Sigmoid colon (tissue), 7 donors: ENCODE measurements at regions of chr1 and their contacts with region 1.

Region 1: DNA sequence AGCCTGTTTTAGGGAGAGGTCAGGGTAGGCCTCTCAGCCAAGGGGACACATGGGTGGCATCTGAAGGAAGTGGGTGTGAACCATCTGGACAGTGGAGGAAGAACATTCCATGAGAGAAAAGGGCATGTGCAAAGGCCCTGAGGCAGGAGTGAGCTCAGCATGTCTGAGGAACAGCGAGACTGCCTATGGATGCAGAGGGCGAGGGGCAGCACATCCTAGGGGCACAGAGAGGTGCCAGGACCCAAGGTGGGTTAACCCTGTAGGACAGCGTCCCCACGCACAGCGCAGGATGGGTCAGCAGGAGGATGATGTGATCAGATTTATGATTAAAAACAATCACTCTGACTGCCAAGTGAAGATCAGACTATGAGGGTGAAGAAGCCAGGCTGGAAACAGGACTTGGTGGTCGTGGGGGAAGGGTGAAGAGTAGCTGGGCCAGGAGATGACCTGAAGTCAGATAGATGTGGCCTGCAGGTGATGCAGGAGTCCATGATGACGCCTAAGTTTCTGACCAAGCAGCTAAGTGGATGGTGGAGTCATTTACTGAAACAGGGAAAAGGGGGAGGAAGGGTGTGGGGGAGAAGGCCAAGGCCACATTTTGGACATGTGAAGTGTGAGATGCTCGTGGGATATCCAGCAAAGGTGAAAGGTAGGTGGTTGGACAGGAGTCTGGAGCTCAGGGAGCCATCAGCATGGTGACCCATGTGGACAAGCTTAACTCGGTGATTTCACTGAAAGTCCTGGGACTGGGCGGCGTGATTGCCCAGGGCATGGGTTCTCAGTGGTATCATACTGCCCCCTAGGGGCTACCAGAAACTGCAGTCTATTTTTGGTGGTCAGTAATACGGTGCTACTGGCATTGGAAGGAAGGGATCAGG is 37.8 kb downstream of the PABPC4 start:
- DNase-seq: peak; percentile 86
- H3K4me3 ChIP-seq: no peak overlapping the region
- H3K27ac ChIP-seq: no peak overlapping the region
- H3K4me1 ChIP-seq: peaks cover 0 to 5% (median 2%) of the 10 kb centered on the region in 4 donors
- H3K27me3 ChIP-seq: no peaks in the 10 kb centered on the region
- CTCF ChIP-seq: peak; percentile 71 to 92 (median 80)
- EP300 ChIP-seq: no peak
- POLR2A ChIP-seq: no peak

Region 2: GRCh38 chr1:39488793-39489566 is 49.8 kb before region 1 on chr1:
- intact Hi-C with region 1: loop called (anchors 10 kb)
- DNase-seq: no peak
- H3K4me3 ChIP-seq: no peak overlapping the region
- H3K27ac ChIP-seq: no peak overlapping the region
- H3K4me1 ChIP-seq: peaks cover 0 to 17% (median 14%) of the 10 kb centered on the region in 4 donors
- H3K27me3 ChIP-seq: peaks cover 10 to 32% (median 25%) of the 10 kb centered on the region in 3 donors
- CTCF ChIP-seq: no peak
- EP300 ChIP-seq: no peak
- POLR2A ChIP-seq: no peak